Activated CD4-positive, alpha-beta T cell treated with anti-CD3 and anti-CD28 coated beads, Interleukin-2, amount 10 ng/mL, durations not matched to agents 24 days and 14 days (primary cell): ENCODE measurements at regions of chr12 and their contacts with region 1.

Region 1: DNA sequence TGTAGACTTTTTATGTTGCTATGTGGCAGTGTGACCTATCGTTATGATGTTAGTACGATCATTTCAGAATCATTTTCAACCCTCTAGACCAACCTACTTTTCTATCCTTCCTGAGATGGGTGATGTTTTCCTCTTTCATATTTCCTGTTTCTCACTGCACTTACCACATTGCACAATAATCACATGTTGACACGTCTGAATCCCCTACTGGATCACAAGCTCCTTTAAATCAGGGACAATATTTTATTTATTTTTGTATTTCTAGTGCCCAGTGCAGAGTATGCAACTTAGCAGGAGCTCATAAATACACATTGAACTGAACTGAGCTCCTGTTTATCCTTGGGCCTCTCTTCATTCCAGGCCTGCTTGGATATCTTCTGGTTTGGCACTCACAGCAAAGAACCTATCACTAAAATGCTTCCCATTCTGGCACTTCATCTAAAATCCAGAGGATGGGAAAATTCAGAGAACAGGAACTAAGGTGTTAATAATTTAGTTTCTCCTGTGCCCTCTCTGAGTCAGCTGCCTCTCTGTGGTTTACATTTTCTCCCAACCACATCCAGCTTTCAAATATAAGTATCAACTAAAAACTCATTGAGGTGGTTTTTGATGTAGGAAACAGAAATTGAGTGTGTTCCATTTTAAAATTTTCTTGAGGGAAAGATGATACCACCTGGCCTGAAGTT is 69.4 kb upstream of the DYRK2 start:
- DNase-seq: peak; percentile 76
- H3K4me3 Mint-ChIP-seq: peak overlapping the region; percentile 17
- H3K27ac Mint-ChIP-seq: peak overlapping the region; percentile 52
- H3K4me1 Mint-ChIP-seq: peaks cover 24% of the 10 kb centered on the region
- H3K27me3 Mint-ChIP-seq: peaks cover 22% of the 10 kb centered on the region

Region 2: GRCh38 chr12:67592216-67593011 is 13.3 kb after region 1 on chr12:
- intact Hi-C with region 1: loop called (anchors 1 kb)
- DNase-seq: peak; percentile 82
- H3K4me3 Mint-ChIP-seq: peak overlapping the region; percentile 41
- H3K27ac Mint-ChIP-seq: peak overlapping the region; percentile 74
- H3K4me1 Mint-ChIP-seq: peaks cover 42% of the 10 kb centered on the region
- H3K27me3 Mint-ChIP-seq: peaks cover 4% of the 10 kb centered on the region

Region 3: GRCh38 chr12:67727702-67728666 is 148.9 kb after region 1 on chr12:
- intact Hi-C with region 1: no loop called
- DNase-seq: no peak
- H3K4me3 Mint-ChIP-seq: no peak overlapping the region
- H3K27ac Mint-ChIP-seq: no peak overlapping the region
- H3K4me1 Mint-ChIP-seq: no peaks in the 10 kb centered on the region
- H3K27me3 Mint-ChIP-seq: peaks cover 19% of the 10 kb centered on the region